Ascending aorta (tissue), 2 donors: ENCODE measurements at regions of chr11 and their contacts with region 1.

Region 1: GRCh38 chr11:11757909-11758308 is 83.9 kb upstream of the USP47 start:
- DNase-seq: no peak
- H3K4me3 ChIP-seq: no peak overlapping the region
- H3K27ac ChIP-seq: no peak overlapping the region
- H3K4me1 ChIP-seq: no peaks in the 10 kb centered on the region
- H3K27me3 ChIP-seq: no peaks in the 10 kb centered on the region
- CTCF ChIP-seq: no peak

Region 2: DNA sequence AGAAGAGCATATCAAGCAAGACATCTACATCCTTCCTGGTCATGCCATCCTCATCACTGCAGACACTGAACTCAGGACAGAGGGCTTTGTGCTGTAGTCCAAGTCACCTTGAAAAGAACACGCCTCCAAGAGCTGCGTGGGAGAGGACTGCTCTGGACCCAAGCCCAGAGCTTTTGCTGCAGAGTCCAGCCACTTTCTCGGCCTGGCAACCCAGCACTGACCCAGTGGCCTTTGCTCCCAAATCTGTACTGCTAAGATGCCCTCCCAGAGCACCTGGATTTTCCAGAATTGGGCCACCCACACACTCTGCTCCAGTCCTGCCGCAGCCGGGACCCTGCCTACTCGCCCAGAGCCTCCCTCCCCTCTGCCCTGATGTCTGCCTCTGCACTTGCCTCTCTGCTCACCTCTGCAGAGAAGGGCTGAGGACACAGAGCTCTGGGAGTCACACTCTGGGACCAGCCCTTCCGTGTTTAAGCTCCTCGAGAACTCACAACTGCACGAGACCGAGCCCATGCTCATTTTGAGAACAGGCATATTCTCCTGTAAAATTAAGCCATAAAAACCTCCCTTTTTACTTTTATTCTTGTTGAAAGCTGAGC is 321.1 kb before region 1 on chr11:
- intact Hi-C with region 1: no loop called
- DNase-seq: no peak
- H3K4me3 ChIP-seq: no peak overlapping the region
- H3K27ac ChIP-seq: no peak overlapping the region
- H3K4me1 ChIP-seq: peaks cover 0 to 6% of the 10 kb centered on the region in 2 donors
- H3K27me3 ChIP-seq: no peaks in the 10 kb centered on the region
- CTCF ChIP-seq: no peak

Region 3: GRCh38 chr11:11608783-11609232 is 149.1 kb before region 1 on chr11:
- intact Hi-C with region 1: no loop called
- DNase-seq: no peak
- H3K4me3 ChIP-seq: no peak overlapping the region
- H3K27ac ChIP-seq: peak overlapping the region in 1 of 2 donors; percentile 34
- H3K4me1 ChIP-seq: peaks cover 11 to 16% of the 10 kb centered on the region in 2 donors
- H3K27me3 ChIP-seq: no peaks in the 10 kb centered on the region
- CTCF ChIP-seq: no peak

Region 4: GRCh38 chr11:11641581-11641980 is 116.3 kb before region 1 on chr11:
- intact Hi-C with region 1: loop called (anchors 10 kb)
- DNase-seq: no peak
- H3K4me3 ChIP-seq: no peak overlapping the region
- H3K27ac ChIP-seq: no peak overlapping the region
- H3K4me1 ChIP-seq: no peaks in the 10 kb centered on the region
- H3K27me3 ChIP-seq: no peaks in the 10 kb centered on the region
- CTCF ChIP-seq: no peak

Region 5: DNA sequence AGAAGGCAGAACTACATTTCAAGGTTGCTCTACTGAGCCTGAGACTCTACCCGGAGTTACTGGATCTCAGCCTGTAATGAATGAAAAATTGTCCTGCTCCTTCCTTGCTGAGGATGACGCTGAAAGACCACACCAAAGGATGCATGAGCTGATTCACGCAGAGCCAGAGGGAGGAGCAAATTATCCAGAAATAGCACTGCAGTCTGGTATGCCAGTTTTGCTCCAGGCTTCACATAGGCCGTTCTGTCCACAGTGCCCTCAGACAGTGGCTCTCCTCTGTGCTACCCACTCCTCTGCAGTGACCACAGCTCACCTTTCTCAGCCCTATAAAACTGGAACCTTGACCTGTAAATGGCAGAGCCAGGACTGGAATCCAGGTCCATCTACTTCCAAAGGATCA is 56.8 kb before region 1 on chr11:
- intact Hi-C with region 1: no loop called
- DNase-seq: no peak
- H3K4me3 ChIP-seq: no peak overlapping the region
- H3K27ac ChIP-seq: no peak overlapping the region
- H3K4me1 ChIP-seq: no peaks in the 10 kb centered on the region
- H3K27me3 ChIP-seq: no peaks in the 10 kb centered on the region
- CTCF ChIP-seq: peak in 1 of 3 experiments; percentile 13